A549 (cell line): ENCODE measurements at regions of chr6 and their contacts with region 1.

Region 1: DNA sequence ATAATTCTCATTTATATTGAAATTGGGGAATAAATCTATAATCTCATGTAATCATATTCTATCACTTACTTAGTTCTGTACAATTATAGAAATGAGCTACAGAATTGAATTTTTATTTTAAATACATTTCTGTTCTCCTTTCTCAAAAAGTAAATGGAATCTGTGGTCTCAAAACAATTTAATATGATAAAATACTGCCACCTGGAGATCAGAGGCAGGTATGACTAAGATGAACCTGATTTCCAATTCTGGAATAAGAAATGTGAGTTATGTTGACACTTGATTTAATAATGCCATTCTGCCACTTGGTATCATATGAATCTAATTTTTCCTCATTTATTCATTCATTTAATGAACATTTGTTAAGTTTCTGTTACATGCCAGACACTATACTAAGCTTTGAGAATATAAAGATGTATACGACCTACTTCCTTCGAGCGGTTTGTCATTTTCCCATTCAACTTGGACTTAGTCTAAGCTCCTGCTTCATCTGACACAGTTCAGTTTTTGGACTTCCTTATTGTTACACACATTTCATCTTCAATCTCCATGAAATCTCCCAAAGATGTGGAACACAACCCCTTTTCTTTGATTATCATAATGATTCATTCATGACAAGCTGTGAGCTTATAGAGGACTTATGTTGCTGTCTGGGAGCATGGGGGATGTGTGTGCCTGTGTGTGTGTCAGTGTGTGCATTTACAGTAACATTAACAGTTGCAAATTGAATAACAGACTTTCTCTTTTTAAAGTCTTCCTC is 7.5 kb upstream of the CCDC28A start:
- DNase-seq: peak; percentile 28 to 31
- ATAC-seq: no peak
- H3K4me3 ChIP-seq: no peak overlapping the region
- H3K27ac ChIP-seq: no peak overlapping the region
- H3K4me1 ChIP-seq: no peaks in the 10 kb centered on the region
- CTCF ChIP-seq: peak; percentile 66
- EP300 ChIP-seq: no peak
- POLR2A ChIP-seq: no peak
- RAD21 ChIP-seq: peak; percentile 70 to 78

Region 2: DNA sequence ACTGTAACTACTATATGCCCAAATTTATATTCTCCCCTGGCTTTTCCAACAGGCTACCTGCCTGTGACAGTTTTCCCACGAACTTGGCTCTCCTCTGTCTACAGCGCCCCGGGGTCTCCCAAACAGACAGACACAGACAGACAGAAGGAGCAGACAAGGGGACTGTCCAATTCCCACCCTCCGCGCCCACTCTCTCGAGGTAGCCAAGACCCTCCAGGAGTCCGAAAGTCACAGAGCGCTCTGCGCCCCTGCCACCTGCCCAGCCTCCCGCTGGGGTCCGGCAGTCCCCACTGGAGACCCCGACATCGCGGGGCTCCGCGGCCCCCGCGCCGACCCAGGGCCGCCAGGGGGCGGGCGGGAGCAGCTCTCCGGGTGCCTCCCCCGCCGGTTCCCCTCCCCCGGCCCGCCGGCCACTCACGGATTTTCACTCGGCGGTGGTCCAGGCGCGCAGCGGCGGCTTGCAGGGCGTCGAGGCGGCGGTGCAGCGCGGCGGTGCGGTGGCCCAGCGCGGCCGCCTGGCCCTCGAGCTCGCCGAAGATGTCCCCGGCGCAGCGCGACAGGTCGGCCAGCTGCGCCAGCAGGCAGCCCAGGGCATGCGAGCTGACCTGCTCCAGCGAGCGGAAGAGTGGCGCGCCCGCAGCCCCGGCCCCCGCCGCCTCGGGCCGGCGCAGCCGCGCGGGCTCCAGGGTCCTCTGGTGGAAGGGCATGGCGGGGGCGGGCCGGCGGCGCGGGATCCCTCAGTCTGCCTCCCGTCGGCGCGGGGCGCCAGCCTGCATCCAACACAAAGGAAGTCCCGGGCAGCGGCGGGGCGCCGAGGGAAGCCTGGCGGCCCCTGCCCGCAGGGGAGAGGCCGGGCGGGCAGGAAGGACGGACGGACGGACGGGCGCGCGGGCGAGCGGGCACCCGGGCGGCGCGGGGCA is 73.8 kb before region 1 on chr6:
- CTCF ChIA-PET with region 1: interaction called, 16 read pairs
- POLR2A ChIA-PET with region 1: no interaction called
- DNase-seq: peak; percentile 42 to 77
- ATAC-seq: peak; percentile 77 to 80
- H3K4me3 ChIP-seq: peak overlapping the region; percentile 75
- H3K27ac ChIP-seq: peak overlapping the region; percentile 82 to 97
- H3K4me1 ChIP-seq: peaks cover 6% of the 10 kb centered on the region; the same call in 1 of the 3 replicates
- CTCF ChIP-seq: peak; percentile 77
- EP300 ChIP-seq: no peak
- POLR2A ChIP-seq: no peak; the same call in 1 of the 2 replicates
- RAD21 ChIP-seq: peak in 1 of 2 experiments; percentile 54; a peak in 2 of 5 replicates

Region 3: DNA sequence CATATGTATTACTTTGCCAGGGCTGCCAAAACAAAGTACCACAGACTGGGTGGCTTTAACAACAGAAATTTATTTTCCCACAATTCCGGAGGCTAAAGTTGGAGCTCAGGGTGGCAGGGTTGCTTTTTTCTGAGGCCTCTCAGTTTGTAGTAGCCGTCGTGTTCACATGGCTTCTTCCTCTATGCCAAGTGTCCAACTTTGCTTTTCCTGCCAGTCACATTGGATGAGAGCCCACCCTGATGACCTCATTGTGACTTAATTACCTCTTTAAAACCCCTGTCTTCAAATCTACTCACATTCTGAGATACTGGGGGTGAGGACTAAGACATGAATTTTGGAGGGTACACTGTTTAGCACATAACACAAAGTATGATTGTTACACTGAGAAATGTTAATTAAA is 19.9 kb after region 1 on chr6:
- CTCF ChIA-PET with region 1: no interaction called
- POLR2A ChIA-PET with region 1: no interaction called
- DNase-seq: no peak
- ATAC-seq: no peak
- H3K4me3 ChIP-seq: no peak overlapping the region
- H3K27ac ChIP-seq: no peak overlapping the region
- H3K4me1 ChIP-seq: peaks cover 5% of the 10 kb centered on the region; the same call in 2 of the 3 replicates
- CTCF ChIP-seq: no peak
- EP300 ChIP-seq: no peak
- POLR2A ChIP-seq: no peak
- RAD21 ChIP-seq: no peak

Region 4: DNA sequence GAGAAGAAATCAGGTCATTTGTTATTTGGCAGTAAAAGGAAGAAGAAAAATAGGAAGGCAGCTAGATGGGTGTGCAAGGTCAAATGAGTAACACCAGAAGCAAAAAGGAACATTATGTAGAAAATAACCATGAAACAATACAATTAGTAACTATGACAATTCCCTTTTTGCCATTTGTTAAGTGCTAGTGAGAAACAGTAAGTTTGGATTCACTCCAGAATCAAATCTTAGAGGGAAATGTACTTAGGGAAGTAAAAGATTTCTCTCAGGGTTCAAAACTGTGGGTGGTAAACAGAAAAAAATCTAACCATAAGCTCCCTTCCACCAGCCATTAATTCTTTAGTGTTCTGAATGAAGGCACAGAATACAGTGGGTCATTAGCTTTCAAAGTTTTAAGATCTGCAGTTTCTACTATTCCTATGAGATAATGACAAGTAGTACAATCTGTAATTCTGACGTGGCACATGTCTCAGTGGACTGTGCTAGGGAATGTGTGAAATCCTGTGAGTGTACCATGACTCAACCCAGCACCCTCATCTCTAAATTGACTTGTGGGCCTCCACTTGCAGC is 204.9 kb after region 1 on chr6:
- CTCF ChIA-PET with region 1: no interaction called
- POLR2A ChIA-PET with region 1: no interaction called
- DNase-seq: peak in 1 of 2 experiments; percentile 37
- ATAC-seq: peak; percentile 78 to 81
- H3K4me3 ChIP-seq: no peak overlapping the region
- H3K27ac ChIP-seq: peak overlapping the region; percentile 72 to 77; a peak in 5 of 6 replicates
- H3K4me1 ChIP-seq: peaks cover 49% of the 10 kb centered on the region
- CTCF ChIP-seq: no peak
- EP300 ChIP-seq: no peak
- POLR2A ChIP-seq: no peak
- RAD21 ChIP-seq: no peak